MCF 10A (cell line): ENCODE measurements at regions of chr12 and their contacts with region 1.

Region 1: DNA sequence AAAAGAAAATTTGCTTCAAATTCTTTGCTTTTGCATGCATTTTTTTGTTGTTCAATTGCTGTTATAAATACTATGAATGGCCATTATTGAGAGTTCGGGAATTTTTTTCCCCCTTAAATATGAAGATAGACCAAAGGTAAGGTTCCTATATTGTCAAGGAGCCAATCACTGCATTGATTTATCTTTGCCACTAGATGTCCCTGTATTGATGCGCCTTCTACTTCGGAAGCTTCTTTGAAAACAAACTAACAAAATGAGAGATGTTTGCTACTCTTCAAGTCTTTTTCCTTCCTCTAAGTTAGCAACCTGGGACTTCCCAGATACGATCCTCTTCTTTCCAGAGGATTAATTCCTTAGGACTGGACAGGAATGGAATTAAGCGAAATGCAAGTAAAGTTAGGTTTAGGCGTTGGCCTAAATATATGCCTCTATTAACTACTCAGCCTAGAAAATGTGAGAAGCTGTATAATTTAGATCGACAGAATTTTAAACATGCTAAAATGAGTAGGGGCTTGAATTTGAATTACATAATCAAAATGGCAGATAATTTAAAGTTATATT is 318.1 kb downstream of the AEBP2 start:
- DNase-seq: peak; percentile 47
- H3K4me3 Mint-ChIP-seq: no peak overlapping the region
- H3K27ac Mint-ChIP-seq: no peak overlapping the region
- H3K4me1 Mint-ChIP-seq: peaks cover 9% of the 10 kb centered on the region
- H3K27me3 Mint-ChIP-seq: no peaks in the 10 kb centered on the region
- CTCF ChIP-seq: peak; percentile 63

Region 2: DNA sequence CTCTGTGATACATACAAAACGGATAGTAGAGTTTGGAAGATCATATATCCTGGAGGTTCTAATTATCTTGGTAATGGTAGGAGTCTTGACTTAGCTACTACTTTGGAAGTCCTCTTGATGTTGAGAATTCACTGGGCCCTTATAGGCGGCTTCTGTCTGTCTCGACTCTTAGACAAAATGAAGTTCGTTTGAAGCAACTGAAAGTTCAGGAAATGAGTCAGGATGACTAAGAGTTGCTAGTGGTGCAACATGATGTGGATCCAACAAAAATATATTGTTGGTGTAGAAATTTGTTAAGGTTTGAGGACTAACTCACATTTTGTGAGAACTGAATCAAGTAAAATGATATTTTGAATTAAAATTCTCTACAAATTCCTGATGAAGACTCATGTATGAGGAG is 45.4 kb before region 1 on chr12:
- CTCF ChIA-PET with region 1: no interaction called
- POLR2A ChIA-PET with region 1: no interaction called
- intact Hi-C with region 1: no loop called
- DNase-seq: peak; percentile 91
- H3K4me3 Mint-ChIP-seq: no peak overlapping the region
- H3K27ac Mint-ChIP-seq: peak overlapping the region; percentile 88
- H3K4me1 Mint-ChIP-seq: peaks cover 20% of the 10 kb centered on the region
- H3K27me3 Mint-ChIP-seq: no peaks in the 10 kb centered on the region
- CTCF ChIP-seq: no peak

Region 3: GRCh38 chr12:19893514-19893913 is 136.1 kb after region 1 on chr12:
- CTCF ChIA-PET with region 1: interaction called, 34 read pairs
- POLR2A ChIA-PET with region 1: interaction called, 4 read pairs
- intact Hi-C with region 1: loop called (anchors 1 kb)
- DNase-seq: peak; percentile 38
- H3K4me3 Mint-ChIP-seq: no peak overlapping the region
- H3K27ac Mint-ChIP-seq: no peak overlapping the region
- H3K4me1 Mint-ChIP-seq: peaks cover 6% of the 10 kb centered on the region
- H3K27me3 Mint-ChIP-seq: peaks cover 57% of the 10 kb centered on the region
- CTCF ChIP-seq: peak; percentile 24

Region 4: GRCh38 chr12:20220339-20220738 is 462.9 kb after region 1 on chr12:
- CTCF ChIA-PET with region 1: interaction called, 10 read pairs
- POLR2A ChIA-PET with region 1: no interaction called
- intact Hi-C with region 1: loop called (anchors 1 kb)
- DNase-seq: peak; percentile 61
- H3K4me3 Mint-ChIP-seq: no peak overlapping the region
- H3K27ac Mint-ChIP-seq: no peak overlapping the region
- H3K4me1 Mint-ChIP-seq: no peaks in the 10 kb centered on the region
- H3K27me3 Mint-ChIP-seq: peaks cover 32% of the 10 kb centered on the region
- CTCF ChIP-seq: peak; percentile 25

Region 5: DNA sequence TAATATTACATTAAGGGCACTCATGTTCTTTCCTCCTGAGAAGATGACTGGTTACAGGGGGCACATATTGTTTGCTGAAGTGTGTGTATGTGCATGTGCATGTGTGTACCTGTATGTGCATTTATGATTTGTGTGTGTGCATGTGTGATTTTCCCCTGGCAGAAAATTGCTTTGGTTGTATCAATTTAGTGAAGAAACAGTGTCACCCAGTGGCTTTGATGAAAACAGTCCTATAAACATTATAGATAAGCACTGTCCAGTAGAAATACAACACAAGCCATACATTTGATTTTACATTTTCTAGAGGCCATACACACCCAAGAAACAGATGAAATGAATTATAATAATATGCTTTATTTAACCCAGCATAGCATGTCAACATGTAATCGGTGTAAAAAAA is 619.6 kb after region 1 on chr12:
- CTCF ChIA-PET with region 1: no interaction called
- POLR2A ChIA-PET with region 1: no interaction called
- intact Hi-C with region 1: loop called (anchors 5 kb)
- DNase-seq: peak; percentile 28
- H3K4me3 Mint-ChIP-seq: no peak overlapping the region
- H3K27ac Mint-ChIP-seq: no peak overlapping the region
- H3K4me1 Mint-ChIP-seq: no peaks in the 10 kb centered on the region
- H3K27me3 Mint-ChIP-seq: peaks cover 81% of the 10 kb centered on the region
- CTCF ChIP-seq: peak; percentile 27